CD14-positive monocyte (primary cell): ENCODE measurements at regions of chr17 and their contacts with region 1.

Region 1: GRCh38 chr17:27332485-27333409 is 38.8 kb downstream of the WSB1 start:
- DNase-seq: peak; percentile 98
- H3K4me3 ChIP-seq: peak overlapping the region; percentile 33 to 75 (median 48)
- H3K4me3 Mint-ChIP-seq: peak overlapping the region; percentile 71 to 85
- H3K27ac ChIP-seq: peak overlapping the region; percentile 92 to 97
- H3K27ac Mint-ChIP-seq: peak overlapping the region; percentile 95 to 98 (median 96)
- H3K4me1 ChIP-seq: peaks cover 57 to 64% of the 10 kb centered on the region in 2 donors
- H3K4me1 Mint-ChIP-seq: peaks cover 55% of the 10 kb centered on the region
- H3K27me3 ChIP-seq: no peaks in the 10 kb centered on the region
- H3K27me3 Mint-ChIP-seq: peaks cover 0 to 2% (median 0%) of the 10 kb centered on the region in 3 donors
- CTCF ChIP-seq: peak; percentile 89

Region 2: DNA sequence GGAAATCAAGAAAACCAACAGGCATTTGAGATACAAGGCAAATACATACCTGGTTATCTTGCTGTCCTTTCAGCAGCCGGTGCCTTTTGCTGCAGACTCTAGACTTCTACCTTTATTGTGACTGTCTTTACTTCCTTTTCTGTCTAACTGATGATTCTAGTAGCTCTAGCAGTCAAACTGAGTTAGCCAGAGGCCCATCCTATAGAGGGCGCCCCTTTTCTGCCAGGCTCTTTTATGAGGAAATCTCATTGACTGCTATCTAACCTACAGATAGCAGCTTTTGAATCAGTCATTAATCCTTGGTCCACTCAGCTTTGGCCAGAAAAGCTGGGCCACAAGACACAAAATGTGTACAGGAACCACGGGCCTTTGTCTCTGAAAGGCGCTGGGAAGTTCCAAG is 126.3 kb before region 1 on chr17:
- intact Hi-C with region 1: loop called in 1 of 2 experiments (anchors 2 kb)
- DNase-seq: peak in 2 of 3 donors; percentile 49 to 55
- H3K4me3 ChIP-seq: no peak overlapping the region
- H3K4me3 Mint-ChIP-seq: no peak overlapping the region
- H3K27ac ChIP-seq: peak overlapping the region in 1 of 2 donors; percentile 51
- H3K27ac Mint-ChIP-seq: peak overlapping the region in 6 of 7 donors; percentile 25 to 89 (median 70)
- H3K4me1 ChIP-seq: peaks cover 16 to 19% of the 10 kb centered on the region in 2 donors
- H3K4me1 Mint-ChIP-seq: peaks cover 19% of the 10 kb centered on the region
- H3K27me3 ChIP-seq: no peaks in the 10 kb centered on the region
- H3K27me3 Mint-ChIP-seq: peaks cover 0 to 6% (median 0%) of the 10 kb centered on the region in 3 donors
- CTCF ChIP-seq: peak; percentile 46

Region 3: GRCh38 chr17:27236717-27237315 is 95.9 kb before region 1 on chr17:
- intact Hi-C with region 1: loop called (anchors 2 to 5 kb)
- DNase-seq: peak; percentile 62 to 84 (median 72)
- H3K4me3 ChIP-seq: no peak overlapping the region
- H3K4me3 Mint-ChIP-seq: no peak overlapping the region
- H3K27ac ChIP-seq: peak overlapping the region in 1 of 2 donors; percentile 36
- H3K27ac Mint-ChIP-seq: peak overlapping the region in 2 of 7 donors; percentile 15 to 41
- H3K4me1 ChIP-seq: peaks cover 69 to 75% of the 10 kb centered on the region in 2 donors
- H3K4me1 Mint-ChIP-seq: peaks cover 70% of the 10 kb centered on the region
- H3K27me3 ChIP-seq: no peaks in the 10 kb centered on the region
- H3K27me3 Mint-ChIP-seq: peaks cover 0 to 2% (median 0%) of the 10 kb centered on the region in 3 donors
- CTCF ChIP-seq: peak; percentile 96

Region 4: GRCh38 chr17:27293898-27294688 is 38.7 kb before region 1 on chr17 and contains the start of gene WSB1:
- intact Hi-C with region 1: loop called (anchors 2 to 5 kb)
- DNase-seq: peak; percentile 92 to 95 (median 92)
- H3K4me3 ChIP-seq: peak within 1 kb of the TSS; percentile 68 to 98 (median 95)
- H3K4me3 Mint-ChIP-seq: peak within 1 kb of the TSS; percentile 99 to 100
- H3K27ac ChIP-seq: peak within 1 kb of the TSS; percentile 98 to 99
- H3K27ac Mint-ChIP-seq: peak within 1 kb of the TSS; percentile 98 to 100 (median 100)
- H3K4me1 ChIP-seq: peaks cover 44 to 49% of the 10 kb centered on the region in 2 donors
- H3K4me1 Mint-ChIP-seq: peaks cover 38% of the 10 kb centered on the region
- H3K27me3 ChIP-seq: no peaks in the 10 kb centered on the region
- H3K27me3 Mint-ChIP-seq: peaks cover 0 to 2% (median 0%) of the 10 kb centered on the region in 3 donors
- CTCF ChIP-seq: no peak
- polyA plus RNA-seq, gene WSB1: 220 to 368 (median 296) TPM